A673 (cell line): ENCODE measurements at regions of chr12 and their contacts with region 1.

Region 1: GRCh38 chr12:62732861-62733427 is 202.0 kb downstream of the PPM1H start:
- DNase-seq: no peak
- H3K4me3 ChIP-seq: no peak overlapping the region
- H3K27ac ChIP-seq: no peak overlapping the region
- H3K4me1 ChIP-seq: no peaks in the 10 kb centered on the region
- H3K27me3 ChIP-seq: no peaks in the 10 kb centered on the region
- CTCF ChIP-seq: no peak

Region 2: DNA sequence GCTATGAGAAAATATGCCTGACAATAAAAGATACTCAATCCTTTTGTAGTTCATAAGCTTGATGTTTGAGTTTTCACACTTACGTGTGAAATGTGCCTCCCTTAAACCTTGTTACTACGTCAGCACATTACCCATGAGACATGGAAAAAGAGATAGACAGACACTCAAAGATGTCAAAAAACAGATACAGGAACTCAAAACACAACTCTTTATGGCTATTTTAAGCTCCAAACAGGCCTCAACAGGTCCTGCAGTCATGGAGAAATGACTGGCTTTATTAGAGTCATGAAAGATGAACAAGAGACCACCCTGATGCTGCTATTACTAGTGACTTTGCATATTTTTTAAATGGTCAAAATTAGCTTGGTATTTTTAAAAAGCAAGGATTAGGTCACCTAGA is 81.8 kb before region 1 on chr12:
- CTCF ChIA-PET with region 1: no interaction called
- POLR2A ChIA-PET with region 1: interaction called, 19 read pairs
- intact Hi-C with region 1: no loop called
- DNase-seq: no peak
- H3K4me3 ChIP-seq: no peak overlapping the region
- H3K27ac ChIP-seq: no peak overlapping the region
- H3K4me1 ChIP-seq: no peaks in the 10 kb centered on the region
- H3K27me3 ChIP-seq: no peaks in the 10 kb centered on the region
- CTCF ChIP-seq: no peak